CD8-positive, alpha-beta T cell (primary cell): ENCODE measurements at regions of chr11 and their contacts with region 1.

Region 1: DNA sequence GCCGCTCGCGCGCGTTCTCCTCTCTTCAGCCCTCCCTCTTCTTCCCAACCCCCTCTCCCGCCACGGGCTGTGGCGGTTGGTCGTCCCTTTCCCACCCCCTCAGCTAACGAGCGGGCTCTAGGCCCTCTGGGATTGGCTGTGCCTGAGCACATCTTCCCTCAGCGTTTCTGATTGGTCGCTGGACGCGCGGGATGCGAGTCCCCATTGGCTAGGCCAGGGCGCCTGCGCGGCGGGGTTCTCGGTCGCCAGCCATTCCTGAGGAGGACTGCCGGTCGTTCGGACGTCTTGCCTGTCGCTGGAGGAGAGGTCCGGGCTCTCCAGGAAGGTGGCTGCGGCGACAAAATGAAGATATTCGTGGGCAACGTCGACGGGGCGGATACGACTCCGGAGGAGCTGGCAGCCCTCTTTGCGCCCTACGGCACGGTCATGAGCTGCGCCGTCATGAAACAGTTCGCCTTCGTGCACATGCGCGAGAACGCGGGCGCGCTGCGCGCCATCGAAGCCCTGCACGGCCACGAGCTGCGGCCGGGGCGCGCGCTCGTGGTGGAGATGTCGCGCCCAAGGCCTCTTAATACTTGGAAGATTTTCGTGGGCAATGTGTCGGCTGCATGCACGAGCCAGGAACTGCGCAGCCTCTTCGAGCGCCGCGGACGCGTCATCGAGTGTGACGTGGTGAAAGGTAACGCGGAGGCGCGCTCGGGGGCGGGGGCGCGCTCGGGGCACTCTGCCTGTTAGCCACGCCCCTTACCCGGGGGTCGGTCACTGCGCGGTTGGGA is at the start of gene RBM14:
- DNase-seq: peak; percentile 96 to 100 (median 98)
- ATAC-seq: peak; percentile 82
- H3K4me3 ChIP-seq: peak within 1 kb of the TSS; percentile 88 to 93
- H3K4me3 Mint-ChIP-seq: peak within 1 kb of the TSS; percentile 98
- H3K27ac ChIP-seq: peak within 1 kb of the TSS; percentile 94 to 99
- H3K27ac Mint-ChIP-seq: peak within 1 kb of the TSS; percentile 97
- H3K4me1 ChIP-seq: peaks cover 43% of the 10 kb centered on the region
- H3K4me1 Mint-ChIP-seq: peaks cover 38% of the 10 kb centered on the region
- H3K27me3 ChIP-seq: no peaks in the 10 kb centered on the region
- H3K27me3 Mint-ChIP-seq: no peaks in the 10 kb centered on the region
- CTCF ChIP-seq: no peak
- total RNA-seq, gene RBM14: 198 to 213 TPM

Region 2: GRCh38 chr11:65261591-65262380 is 1354.8 kb before region 1 on chr11 and contains the start of gene POLA2:
- CTCF ChIA-PET with region 1: no interaction called
- POLR2A ChIA-PET with region 1: no interaction called
- intact Hi-C with region 1: loop called in 1 of 2 experiments (anchors 10 kb)
- DNase-seq: peak; percentile 90 to 99 (median 95)
- ATAC-seq: peak; percentile 95
- H3K4me3 ChIP-seq: peak within 1 kb of the TSS; percentile 79 to 85
- H3K4me3 Mint-ChIP-seq: peak within 1 kb of the TSS; percentile 93
- H3K27ac ChIP-seq: peak within 1 kb of the TSS; percentile 85 to 93
- H3K27ac Mint-ChIP-seq: peak within 1 kb of the TSS; percentile 95
- H3K4me1 ChIP-seq: peaks cover 14% of the 10 kb centered on the region
- H3K4me1 Mint-ChIP-seq: peaks cover 43% of the 10 kb centered on the region
- H3K27me3 ChIP-seq: no peaks in the 10 kb centered on the region
- H3K27me3 Mint-ChIP-seq: no peaks in the 10 kb centered on the region
- CTCF ChIP-seq: no peak
- total RNA-seq, gene POLA2: 8.5 to 9.3 TPM

Region 3: GRCh38 chr11:66408488-66409214 is 207.9 kb before region 1 on chr11:
- CTCF ChIA-PET with region 1: interaction called, 5 read pairs
- POLR2A ChIA-PET with region 1: no interaction called
- intact Hi-C with region 1: loop called in 1 of 2 experiments (anchors 1 kb)
- DNase-seq: peak; percentile 88 to 97 (median 92)
- ATAC-seq: peak; percentile 85
- H3K4me3 ChIP-seq: peak overlapping the region; percentile 18 to 62
- H3K4me3 Mint-ChIP-seq: peak overlapping the region; percentile 79
- H3K27ac ChIP-seq: no peak overlapping the region
- H3K27ac Mint-ChIP-seq: no peak overlapping the region
- H3K4me1 ChIP-seq: peaks cover 8% of the 10 kb centered on the region
- H3K4me1 Mint-ChIP-seq: peaks cover 4% of the 10 kb centered on the region
- H3K27me3 ChIP-seq: peaks cover 4 to 14% of the 10 kb centered on the region in 2 experiments
- H3K27me3 Mint-ChIP-seq: peaks cover 41% of the 10 kb centered on the region
- CTCF ChIP-seq: peak; percentile 100

Region 4: GRCh38 chr11:66545701-66546367 is 70.7 kb before region 1 on chr11 and contains the start of gene ZDHHC24:
- CTCF ChIA-PET with region 1: no interaction called
- POLR2A ChIA-PET with region 1: interaction called, 9 read pairs
- intact Hi-C with region 1: loop called (anchors 1 to 2 kb)
- DNase-seq: peak; percentile 57 to 93 (median 78)
- ATAC-seq: peak; percentile 81
- H3K4me3 ChIP-seq: peak within 1 kb of the TSS; percentile 68 to 97
- H3K4me3 Mint-ChIP-seq: peak within 1 kb of the TSS; percentile 84
- H3K27ac ChIP-seq: peak within 1 kb of the TSS; percentile 79 to 83
- H3K27ac Mint-ChIP-seq: peak within 1 kb of the TSS; percentile 92
- H3K4me1 ChIP-seq: peaks cover 31% of the 10 kb centered on the region
- H3K4me1 Mint-ChIP-seq: peaks cover 40% of the 10 kb centered on the region
- H3K27me3 ChIP-seq: no peaks in the 10 kb centered on the region
- H3K27me3 Mint-ChIP-seq: no peaks in the 10 kb centered on the region
- CTCF ChIP-seq: no peak
- total RNA-seq, gene ZDHHC24: 15.0 to 15.9 TPM

Region 5: GRCh38 chr11:66592457-66593302 is 23.9 kb before region 1 on chr11 and contains the starts of genes CCDC87 and CCS:
- CTCF ChIA-PET with region 1: interaction called, 5 read pairs
- POLR2A ChIA-PET with region 1: interaction called, 13 read pairs
- intact Hi-C with region 1: loop called (anchors 1 kb)
- DNase-seq: peak; percentile 98 to 100 (median 99)
- ATAC-seq: peak; percentile 97
- H3K4me3 ChIP-seq: peak within 1 kb of the TSS; percentile 68 to 97
- H3K4me3 Mint-ChIP-seq: peak within 1 kb of the TSS; percentile 100
- H3K27ac ChIP-seq: peak within 1 kb of the TSS; percentile 84 to 86
- H3K27ac Mint-ChIP-seq: peak within 1 kb of the TSS; percentile 99
- H3K4me1 ChIP-seq: peaks cover 33% of the 10 kb centered on the region
- H3K4me1 Mint-ChIP-seq: peaks cover 39% of the 10 kb centered on the region
- H3K27me3 ChIP-seq: no peaks in the 10 kb centered on the region
- H3K27me3 Mint-ChIP-seq: no peaks in the 10 kb centered on the region
- CTCF ChIP-seq: peak; percentile 55
- total RNA-seq, gene CCDC87: 0.53 to 0.65 TPM
- total RNA-seq, gene CCS: 30.0 to 32.3 TPM

Region 6: GRCh38 chr11:66842896-66843775 is 226.6 kb after region 1 on chr11 and contains the start of gene RCE1:
- CTCF ChIA-PET with region 1: no interaction called
- POLR2A ChIA-PET with region 1: interaction called, 4 read pairs
- intact Hi-C with region 1: loop called (anchors 1 kb)
- DNase-seq: peak; percentile 85 to 96 (median 89)
- ATAC-seq: peak; percentile 88
- H3K4me3 ChIP-seq: peak within 1 kb of the TSS; percentile 68 to 91
- H3K4me3 Mint-ChIP-seq: peak within 1 kb of the TSS; percentile 86
- H3K27ac ChIP-seq: peak within 1 kb of the TSS; percentile 99 to 100
- H3K27ac Mint-ChIP-seq: peak within 1 kb of the TSS; percentile 93
- H3K4me1 ChIP-seq: peaks cover 47% of the 10 kb centered on the region
- H3K4me1 Mint-ChIP-seq: peaks cover 51% of the 10 kb centered on the region
- H3K27me3 ChIP-seq: no peaks in the 10 kb centered on the region
- H3K27me3 Mint-ChIP-seq: no peaks in the 10 kb centered on the region
- CTCF ChIP-seq: no peak
- total RNA-seq, gene RCE1: 68.9 to 72.2 TPM